ENCODE measurements at regions of chr7 and their contacts with region 1.

Region 1: GRCh38 chr7:87152107-87152844 is at the start of gene DMTF1:
- DNase-seq: peak; percentile 96
- ATAC-seq: peak; percentile 97 to 98
- total RNA-seq, gene DMTF1: 25.4 to 31.7 TPM

Region 2: GRCh38 chr7:86130268-86130667 is 1022.0 kb before region 1 on chr7:
- intact Hi-C with region 1: no loop called
- DNase-seq: no peak
- ATAC-seq: no peak

Region 3: GRCh38 chr7:86939197-86939814 is 213.0 kb before region 1 on chr7:
- intact Hi-C with region 1: loop called (anchors 1 to 5 kb)
- DNase-seq: no peak
- ATAC-seq: peak; percentile 67 to 72

Region 4: DNA sequence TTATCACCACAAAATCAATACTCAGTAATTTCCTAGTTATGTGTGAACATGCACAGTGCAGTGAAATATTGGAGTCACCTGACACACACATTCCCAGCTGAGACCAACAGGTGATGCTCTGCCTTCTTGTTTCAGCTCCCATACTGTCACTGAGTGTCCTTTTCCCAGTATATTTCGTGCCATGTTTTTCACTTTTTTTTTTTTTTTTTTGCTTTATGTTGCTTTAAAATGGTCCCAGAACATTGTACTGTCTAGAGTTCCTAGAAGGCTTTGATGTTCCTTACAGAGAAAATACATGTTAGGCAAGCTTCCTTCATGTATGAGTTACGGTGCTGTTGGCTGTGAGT is 138.5 kb before region 1 on chr7:
- intact Hi-C with region 1: no loop called
- DNase-seq: no peak
- ATAC-seq: no peak

Region 5: DNA sequence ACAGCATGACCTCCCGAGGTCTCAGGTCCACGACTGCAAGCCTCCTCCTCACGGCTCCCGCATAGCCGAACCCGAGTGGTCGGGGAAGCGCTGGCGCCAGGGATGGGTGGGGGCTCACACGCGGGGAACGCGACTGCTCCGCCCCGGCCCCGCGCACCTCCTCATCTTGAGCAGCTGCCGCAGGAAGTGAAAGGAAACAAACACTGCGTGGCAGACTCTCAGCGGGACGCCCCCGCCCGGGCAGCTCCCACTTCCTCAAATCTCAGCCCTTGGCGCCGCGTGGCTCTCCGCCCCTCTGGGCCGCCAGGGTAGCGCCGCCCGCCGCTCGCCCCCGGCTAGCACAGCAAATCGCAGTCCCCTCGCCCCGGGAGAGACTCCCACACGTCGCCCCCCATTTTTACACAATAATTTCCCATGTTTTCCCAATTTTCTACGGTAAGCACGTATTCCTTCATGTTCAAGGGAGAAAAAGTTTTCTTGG is 67.3 kb after region 1 on chr7 and contains the start of gene TMEM243:
- intact Hi-C with region 1: loop called in 1 of 2 experiments (anchors 10 kb)
- DNase-seq: peak; percentile 87
- ATAC-seq: peak; percentile 87 to 94
- total RNA-seq, gene TMEM243: 11.9 to 12.2 TPM

Region 6: GRCh38 chr7:87345166-87345927 is 193.1 kb after region 1 on chr7 and contains the start of gene CROT:
- intact Hi-C with region 1: loop called in 1 of 2 experiments (anchors 10 kb)
- DNase-seq: peak; percentile 98
- ATAC-seq: peak; percentile 100
- total RNA-seq, gene CROT: 5.3 to 7.7 TPM